Calu3 (cell line): ENCODE measurements at regions of chr17 and their contacts with region 1.

Region 1: GRCh38 chr17:59680314-59680713 is 26.9 kb downstream of the PTRH2 start:
- DNase-seq: no peak
- H3K4me3 Mint-ChIP-seq: no peak overlapping the region
- H3K27ac Mint-ChIP-seq: no peak overlapping the region
- H3K4me1 Mint-ChIP-seq: no peaks in the 10 kb centered on the region
- H3K27me3 Mint-ChIP-seq: no peaks in the 10 kb centered on the region
- CTCF ChIP-seq: no peak

Region 2: GRCh38 chr17:59619293-59620063 is 60.8 kb before region 1 on chr17 and contains the start of gene CLTC:
- CTCF ChIA-PET with region 1: no interaction called
- intact Hi-C with region 1: loop called (anchors 10 kb)
- DNase-seq: peak; percentile 87
- H3K4me3 Mint-ChIP-seq: peak within 1 kb of the TSS; percentile 91
- H3K27ac Mint-ChIP-seq: peak within 1 kb of the TSS; percentile 98
- H3K4me1 Mint-ChIP-seq: peaks cover 16% of the 10 kb centered on the region
- H3K27me3 Mint-ChIP-seq: no peaks in the 10 kb centered on the region
- CTCF ChIP-seq: no peak
- total RNA-seq, gene CLTC: 187 and 212 TPM in 2 replicates